Left colon (tissue), 2 donors: ENCODE measurements at regions of chr4 and their contacts with region 1.

Region 1: DNA sequence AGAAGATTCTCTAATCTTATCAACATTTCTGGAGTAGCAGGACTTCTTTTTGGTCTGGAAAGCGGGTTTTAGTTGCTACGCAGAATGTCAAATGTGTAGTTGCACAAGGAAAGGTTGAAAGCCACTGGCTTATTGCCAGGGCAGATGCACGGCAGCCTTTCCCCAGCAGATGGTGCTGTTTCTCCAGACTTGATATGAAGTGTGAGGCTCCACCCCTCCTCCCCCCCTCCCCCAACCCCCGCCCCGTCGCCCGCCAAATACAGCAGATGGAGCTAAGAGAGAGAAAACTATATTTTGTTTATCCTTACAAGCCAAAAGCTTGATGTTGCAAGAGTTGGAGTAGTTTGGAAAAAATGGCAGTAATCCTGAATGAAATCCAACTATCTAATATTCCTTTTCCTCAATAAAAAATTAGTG is 32.0 kb downstream of the ENOPH1 start:
- DNase-seq: peak; percentile 66 to 86
- ATAC-seq: peak; percentile 84

Region 2: GRCh38 chr4:82739316-82740179 is 277.1 kb after region 1 on chr4:
- intact Hi-C with region 1: loop called in 1 of 2 experiments (anchors 10 kb)
- DNase-seq: peak; percentile 32 to 85
- ATAC-seq: peak; percentile 100

Region 3: GRCh38 chr4:82801910-82802521 is 339.6 kb after region 1 on chr4:
- intact Hi-C with region 1: loop called in 1 of 2 experiments (anchors 10 kb)
- DNase-seq: no peak
- ATAC-seq: no peak

Region 4: DNA sequence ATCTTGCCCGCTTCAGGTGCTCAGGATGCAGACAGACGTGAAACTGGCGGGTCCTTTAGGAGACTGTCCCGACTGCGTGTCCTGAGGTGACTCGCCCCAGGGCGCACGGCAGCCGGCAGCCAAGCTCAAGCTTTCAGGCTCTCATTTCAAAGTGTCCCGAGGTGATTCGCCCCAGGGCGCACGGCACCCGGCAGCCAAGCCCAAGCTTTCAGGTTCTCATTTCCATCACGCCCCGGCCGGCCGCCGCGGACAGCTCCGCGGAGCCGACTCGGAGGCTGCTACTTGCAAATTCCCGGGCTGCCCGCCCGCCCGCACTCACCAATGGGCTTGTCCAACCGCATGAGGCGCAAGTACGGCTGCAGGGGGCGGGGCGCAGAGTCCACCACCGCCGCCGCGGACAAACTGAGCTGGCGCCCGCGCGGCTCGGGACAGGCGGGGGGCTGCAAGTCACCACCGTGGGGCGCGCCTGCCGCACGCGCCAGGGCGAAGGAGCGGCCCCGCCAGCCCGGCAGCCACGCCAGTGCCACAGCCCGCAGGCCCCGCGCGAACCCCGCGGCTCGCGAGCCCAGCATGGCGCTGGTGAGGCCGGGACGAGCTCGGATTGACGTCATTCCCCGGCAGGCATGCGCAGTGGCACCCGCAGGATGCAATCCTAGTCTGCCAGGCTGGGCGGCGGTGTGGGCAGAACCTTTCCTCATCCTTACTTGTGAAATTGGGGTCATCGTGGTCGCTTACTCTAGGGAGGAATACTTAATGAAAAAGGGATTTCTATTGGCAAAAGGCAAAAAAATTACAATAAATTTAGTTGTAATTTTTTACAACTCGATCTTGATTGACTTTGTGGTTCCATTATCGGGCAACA is 822.0 kb after region 1 on chr4 and contains the start of gene COQ2:
- intact Hi-C with region 1: loop called in 1 of 2 experiments (anchors 10 kb)
- DNase-seq: peak; percentile 96
- ATAC-seq: peak; percentile 90
- total RNA-seq, gene COQ2: 18.9 to 23.3 TPM